Mammary epithelial cell (primary cell): ENCODE measurements at regions of chr2 and their contacts with region 1.

Region 1: GRCh38 chr2:11873356-11874154 is 127.1 kb downstream of the LPIN1 start:
- DNase-seq: no peak
- H3K4me3 ChIP-seq: no peak overlapping the region
- H3K27ac ChIP-seq: no peak overlapping the region
- H3K4me1 ChIP-seq: no peaks in the 10 kb centered on the region
- H3K27me3 ChIP-seq: no peaks in the 10 kb centered on the region
- CTCF ChIP-seq: no peak

Region 2: DNA sequence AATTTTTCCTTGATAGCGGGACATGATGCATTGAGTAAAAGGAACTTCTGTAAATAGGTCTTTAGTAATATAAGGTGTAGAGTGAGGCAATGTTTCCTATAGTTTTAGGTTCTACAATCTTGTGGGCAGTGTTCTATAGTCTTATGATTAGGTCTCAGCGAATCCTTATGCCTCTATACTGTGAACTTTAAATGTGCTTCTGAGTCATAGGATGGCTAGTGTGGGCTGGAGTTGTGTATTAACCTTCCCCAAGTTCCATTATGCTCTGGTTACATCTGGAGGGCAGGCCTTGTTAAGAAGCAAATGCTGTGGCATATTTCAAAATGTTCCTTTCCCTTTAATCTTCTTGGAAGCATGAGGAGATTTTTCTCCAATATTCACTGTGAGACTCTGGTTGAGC is 602.7 kb before region 1 on chr2:
- CTCF ChIA-PET with region 1: interaction called, 12 read pairs
- dilution Hi-C with region 1: no loop called
- in situ Hi-C with region 1: no loop called
- intact Hi-C with region 1: no loop called
- DNase-seq: peak; percentile 24
- H3K4me3 ChIP-seq: no peak overlapping the region
- H3K27ac ChIP-seq: no peak overlapping the region
- H3K4me1 ChIP-seq: no peaks in the 10 kb centered on the region
- H3K27me3 ChIP-seq: no peaks in the 10 kb centered on the region
- CTCF ChIP-seq: no peak

Region 3: DNA sequence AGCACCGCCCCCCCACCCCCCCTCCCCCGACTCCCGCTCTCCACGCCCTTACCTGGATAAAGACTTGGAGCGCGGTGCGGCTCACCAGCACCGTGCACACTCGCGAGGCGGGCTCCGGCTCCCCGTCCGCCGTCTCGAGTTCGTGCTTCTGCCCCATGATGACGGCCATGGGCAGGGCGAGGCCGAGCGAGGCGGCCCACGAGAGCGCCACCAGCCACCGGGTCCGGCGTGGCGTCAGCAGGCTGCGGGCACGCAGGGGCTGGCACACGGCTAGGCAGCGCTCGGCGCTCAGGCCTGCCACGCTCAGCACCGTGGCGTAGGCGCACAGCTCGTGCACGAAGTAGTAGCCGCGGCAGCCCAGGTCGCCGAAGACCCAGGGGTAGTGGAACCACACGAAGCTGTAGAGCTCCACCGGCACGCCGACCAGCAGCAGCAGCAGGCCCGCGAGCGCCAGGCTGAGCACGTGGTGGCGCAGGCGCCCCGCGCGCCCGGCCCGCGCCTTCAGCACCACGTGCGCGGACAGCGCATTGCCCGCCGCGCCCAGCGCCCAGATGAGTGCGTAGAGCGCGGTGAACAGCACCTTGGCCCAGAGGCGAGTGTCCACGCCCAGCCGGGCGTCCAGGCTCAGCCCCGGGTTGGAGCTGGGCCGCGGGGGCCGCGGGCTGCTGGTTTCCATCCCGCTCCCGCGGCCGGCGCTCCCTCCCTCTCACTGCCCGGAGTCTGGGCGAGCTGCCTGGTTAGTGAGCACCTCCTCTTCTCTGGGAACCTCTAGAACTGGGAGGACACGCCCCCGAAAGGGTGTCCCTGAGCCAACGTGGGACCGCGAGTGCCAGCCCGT is 203.9 kb before region 1 on chr2 and contains the start of gene NTSR2:
- CTCF ChIA-PET with region 1: no interaction called
- dilution Hi-C with region 1: no loop called
- in situ Hi-C with region 1: no loop called
- intact Hi-C with region 1: no loop called
- DNase-seq: peak; percentile 69
- H3K4me3 ChIP-seq: no peak within 1 kb of the TSS
- H3K27ac ChIP-seq: no peak within 1 kb of the TSS
- H3K4me1 ChIP-seq: peaks cover 6% of the 10 kb centered on the region
- H3K27me3 ChIP-seq: peaks cover 4% of the 10 kb centered on the region
- CTCF ChIP-seq: no peak
- total RNA-seq, gene NTSR2: not detected

Region 4: GRCh38 chr2:11842336-11842735 is 31.2 kb before region 1 on chr2:
- CTCF ChIA-PET with region 1: no interaction called
- dilution Hi-C with region 1: no loop called
- in situ Hi-C with region 1: no loop called
- intact Hi-C with region 1: no loop called
- DNase-seq: no peak
- H3K4me3 ChIP-seq: no peak overlapping the region
- H3K27ac ChIP-seq: no peak overlapping the region
- H3K4me1 ChIP-seq: no peaks in the 10 kb centered on the region
- H3K27me3 ChIP-seq: no peaks in the 10 kb centered on the region
- CTCF ChIP-seq: no peak

Region 5: GRCh38 chr2:11945139-11946126 is 71.9 kb after region 1 on chr2:
- CTCF ChIA-PET with region 1: no interaction called
- dilution Hi-C with region 1: no loop called
- in situ Hi-C with region 1: loop called in 1 of 2 experiments (anchors 10 kb)
- intact Hi-C with region 1: no loop called
- DNase-seq: no peak
- H3K4me3 ChIP-seq: no peak overlapping the region
- H3K27ac ChIP-seq: no peak overlapping the region
- H3K4me1 ChIP-seq: peaks cover 3% of the 10 kb centered on the region
- H3K27me3 ChIP-seq: no peaks in the 10 kb centered on the region
- CTCF ChIP-seq: no peak

Region 6: GRCh38 chr2:11967946-11968465 is 94.5 kb after region 1 on chr2:
- CTCF ChIA-PET with region 1: no interaction called
- dilution Hi-C with region 1: no loop called
- in situ Hi-C with region 1: no loop called
- intact Hi-C with region 1: no loop called
- DNase-seq: peak; percentile 87
- H3K4me3 ChIP-seq: no peak overlapping the region
- H3K27ac ChIP-seq: no peak overlapping the region
- H3K4me1 ChIP-seq: peaks cover 29% of the 10 kb centered on the region
- H3K27me3 ChIP-seq: no peaks in the 10 kb centered on the region
- CTCF ChIP-seq: no peak